Naive thymus-derived CD4-positive, alpha-beta T cell (primary cell): ENCODE measurements at regions of chr10 and their contacts with region 1.

Region 1: DNA sequence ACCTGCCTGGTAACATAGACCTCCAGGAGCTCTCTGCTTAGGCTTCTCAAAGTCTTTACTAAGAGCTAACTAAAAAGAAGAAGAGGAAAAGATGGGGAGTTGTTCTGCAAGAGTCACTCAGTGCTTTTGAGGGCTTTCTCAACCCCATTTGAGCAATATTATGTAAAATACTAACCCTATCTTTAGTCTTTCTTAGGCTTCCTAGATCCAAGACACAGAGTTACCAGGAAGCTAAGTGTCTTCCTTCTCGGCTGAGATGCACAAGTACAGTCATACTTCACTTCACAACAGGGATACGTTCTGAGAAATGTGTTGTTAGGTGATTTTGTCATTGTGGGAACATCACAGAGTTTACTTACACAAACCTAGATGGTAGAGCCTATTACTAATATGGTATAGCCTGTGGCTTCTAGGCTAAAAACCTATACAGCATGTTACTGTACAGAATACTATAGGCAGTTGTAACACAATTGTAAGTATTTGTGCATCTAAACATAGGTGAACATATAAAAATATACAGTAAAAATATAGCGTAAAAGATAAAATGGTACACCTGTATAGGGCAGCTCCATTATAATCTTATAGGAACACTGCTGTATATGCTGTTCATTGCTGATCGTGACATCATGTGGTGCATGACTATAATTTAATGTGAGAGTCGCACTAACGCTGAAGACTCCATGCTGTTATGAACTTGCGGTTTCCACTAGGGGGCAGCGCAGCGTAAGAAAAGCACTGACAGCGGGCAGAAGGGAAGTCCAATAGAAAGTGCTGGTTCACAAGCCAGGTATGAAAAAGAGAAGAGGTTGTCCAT is 16.3 kb downstream of the ANKRD22 start:
- DNase-seq: peak; percentile 65 to 86 (median 82)
- ATAC-seq: peak; percentile 95
- H3K4me3 ChIP-seq: no peak overlapping the region
- H3K4me3 Mint-ChIP-seq: no peak overlapping the region
- H3K27ac ChIP-seq: no peak overlapping the region
- H3K27ac Mint-ChIP-seq: no peak overlapping the region
- H3K4me1 ChIP-seq: peaks cover 14 to 46% of the 10 kb centered on the region in 2 donors
- H3K4me1 Mint-ChIP-seq: peaks cover 10 to 33% (median 32%) of the 10 kb centered on the region in 7 donors
- H3K27me3 ChIP-seq: no peaks in the 10 kb centered on the region
- H3K27me3 Mint-ChIP-seq: no peaks in the 10 kb centered on the region

Region 2: DNA sequence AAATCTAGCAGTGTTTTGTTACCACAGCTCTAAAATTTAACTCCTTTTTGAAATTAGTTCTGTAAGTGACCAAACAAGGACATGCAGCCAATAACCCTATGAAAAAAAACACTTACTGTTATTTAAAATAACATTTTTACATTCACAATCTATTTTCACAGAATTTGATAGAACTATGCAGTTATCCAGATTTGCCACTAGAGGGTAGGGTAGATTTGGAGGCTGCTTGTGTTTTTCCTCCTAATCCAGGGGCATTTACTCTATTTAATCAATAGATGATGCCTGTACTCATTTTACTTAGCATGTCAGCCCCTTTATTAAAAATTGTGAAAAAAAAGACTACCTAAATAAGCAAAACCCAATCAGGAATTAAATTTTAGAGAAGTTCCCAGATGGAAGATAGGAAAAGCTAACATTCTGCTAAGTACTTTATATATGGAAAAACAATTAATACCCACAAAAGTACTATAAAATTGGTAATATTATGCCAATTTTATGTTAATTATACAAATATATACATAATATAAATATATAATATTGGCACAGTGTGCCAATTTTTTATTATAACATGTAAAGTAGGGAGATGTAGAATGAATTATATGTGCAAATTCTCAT is 147.3 kb before region 1 on chr10:
- CTCF ChIA-PET with region 1: interaction called, 9 read pairs
- POLR2A ChIA-PET with region 1: no interaction called
- intact Hi-C with region 1: loop called in 1 of 2 experiments (anchors 1 kb)
- DNase-seq: peak in 5 of 9 donors; percentile 7 to 38 (median 18)
- ATAC-seq: peak; percentile 70
- H3K4me3 ChIP-seq: no peak overlapping the region
- H3K4me3 Mint-ChIP-seq: no peak overlapping the region
- H3K27ac ChIP-seq: no peak overlapping the region
- H3K27ac Mint-ChIP-seq: no peak overlapping the region
- H3K4me1 ChIP-seq: no peaks in the 10 kb centered on the region
- H3K4me1 Mint-ChIP-seq: no peaks in the 10 kb centered on the region
- H3K27me3 ChIP-seq: no peaks in the 10 kb centered on the region
- H3K27me3 Mint-ChIP-seq: peaks cover 7 to 30% (median 7%) of the 10 kb centered on the region in 5 donors

Region 3: GRCh38 chr10:88820748-88821389 is 14.4 kb before region 1 on chr10:
- CTCF ChIA-PET with region 1: interaction called, 37 read pairs
- POLR2A ChIA-PET with region 1: interaction called, 10 read pairs
- intact Hi-C with region 1: loop called (anchors 1 kb)
- DNase-seq: peak in 1 of 9 donors; percentile 13
- ATAC-seq: no peak
- H3K4me3 ChIP-seq: no peak overlapping the region
- H3K4me3 Mint-ChIP-seq: peak overlapping the region in 2 of 10 donors; percentile 13 to 16
- H3K27ac ChIP-seq: no peak overlapping the region
- H3K27ac Mint-ChIP-seq: peak overlapping the region in 4 of 9 donors; percentile 19 to 86 (median 44)
- H3K4me1 ChIP-seq: peaks cover 24 to 34% of the 10 kb centered on the region in 2 donors
- H3K4me1 Mint-ChIP-seq: peaks cover 20 to 66% (median 51%) of the 10 kb centered on the region in 7 donors
- H3K27me3 ChIP-seq: no peaks in the 10 kb centered on the region
- H3K27me3 Mint-ChIP-seq: peaks cover 0 to 4% (median 0%) of the 10 kb centered on the region in 5 donors

Region 4: DNA sequence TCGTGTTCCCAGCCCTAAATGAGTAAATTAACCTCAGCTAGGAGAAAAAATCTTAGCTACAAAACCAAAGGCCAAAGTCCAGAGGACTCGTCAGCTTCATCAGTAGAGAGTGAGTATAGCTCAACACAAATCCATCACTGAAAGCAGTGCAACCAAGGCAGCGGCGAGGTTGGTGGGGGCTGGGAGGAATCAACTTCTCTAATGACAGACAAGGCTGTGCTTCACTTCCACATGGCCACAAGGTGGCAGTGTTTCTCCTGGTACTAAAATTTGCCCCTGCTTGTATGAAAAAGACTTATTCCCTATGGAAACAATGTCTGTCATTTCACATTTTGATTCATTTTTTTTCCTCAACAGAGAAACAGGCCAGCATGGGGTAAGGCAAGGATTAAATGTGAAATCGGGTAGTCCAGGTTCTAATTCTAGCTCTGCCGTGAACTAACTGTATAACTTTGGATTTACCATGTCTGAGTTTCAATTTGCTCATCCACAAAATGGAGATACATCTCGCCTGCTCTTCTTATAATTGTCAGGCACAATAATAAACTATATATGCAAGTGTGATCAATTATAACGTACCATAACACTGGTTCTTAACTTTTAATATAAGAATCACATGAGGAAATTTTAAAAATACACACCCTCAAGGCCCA is 194.6 kb after region 1 on chr10:
- CTCF ChIA-PET with region 1: interaction called, 9 read pairs
- POLR2A ChIA-PET with region 1: no interaction called
- intact Hi-C with region 1: loop called in 1 of 2 experiments (anchors 5 kb)
- DNase-seq: peak; percentile 37 to 68 (median 53)
- ATAC-seq: peak; percentile 85
- H3K4me3 ChIP-seq: no peak overlapping the region
- H3K4me3 Mint-ChIP-seq: peak overlapping the region in 1 of 10 donors; percentile 30
- H3K27ac ChIP-seq: no peak overlapping the region
- H3K27ac Mint-ChIP-seq: no peak overlapping the region
- H3K4me1 ChIP-seq: no peaks in the 10 kb centered on the region
- H3K4me1 Mint-ChIP-seq: peaks cover 0 to 31% (median 0%) of the 10 kb centered on the region in 7 donors
- H3K27me3 ChIP-seq: no peaks in the 10 kb centered on the region
- H3K27me3 Mint-ChIP-seq: no peaks in the 10 kb centered on the region